MCF 10A (cell line): ENCODE measurements at regions of chr10 and their contacts with region 1.

Region 1: DNA sequence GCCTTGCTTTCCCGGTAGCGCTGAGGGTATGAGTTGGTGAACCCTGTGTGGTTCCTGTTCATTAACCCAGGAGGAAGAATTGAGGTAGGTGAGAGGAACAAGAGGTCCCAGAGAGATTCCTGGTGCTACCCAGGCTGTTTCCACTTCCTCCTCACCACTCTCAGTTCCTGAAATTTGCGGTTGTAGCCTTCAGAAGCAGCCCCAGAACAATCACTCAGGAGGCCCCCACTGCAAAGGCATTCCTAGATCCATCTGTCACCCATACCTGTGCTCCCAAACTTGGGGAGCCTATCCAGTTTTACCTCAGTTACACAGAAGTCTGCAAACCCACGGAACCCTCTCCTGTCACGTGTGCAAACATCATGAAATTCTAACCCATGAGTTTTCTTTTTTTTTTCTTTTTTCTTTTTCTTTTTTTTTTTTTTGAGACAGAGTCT is 9.0 kb upstream of the PIP4K2A start:
- DNase-seq: no peak
- H3K4me3 Mint-ChIP-seq: no peak overlapping the region
- H3K27ac Mint-ChIP-seq: no peak overlapping the region
- H3K4me1 Mint-ChIP-seq: no peaks in the 10 kb centered on the region
- H3K27me3 Mint-ChIP-seq: peaks cover 11% of the 10 kb centered on the region
- CTCF ChIP-seq: no peak

Region 2: GRCh38 chr10:22805283-22805682 is 81.9 kb after region 1 on chr10:
- CTCF ChIA-PET with region 1: interaction called, 5 read pairs
- POLR2A ChIA-PET with region 1: no interaction called
- intact Hi-C with region 1: loop called (anchors 10 kb)
- DNase-seq: no peak
- H3K4me3 Mint-ChIP-seq: no peak overlapping the region
- H3K27ac Mint-ChIP-seq: no peak overlapping the region
- H3K4me1 Mint-ChIP-seq: peaks cover 21% of the 10 kb centered on the region
- H3K27me3 Mint-ChIP-seq: no peaks in the 10 kb centered on the region
- CTCF ChIP-seq: no peak

Region 3: GRCh38 chr10:23438550-23439441 is 715.4 kb after region 1 on chr10 and contains the start of gene OTUD1:
- CTCF ChIA-PET with region 1: no interaction called
- POLR2A ChIA-PET with region 1: no interaction called
- intact Hi-C with region 1: no loop called
- DNase-seq: peak; percentile 93
- H3K4me3 Mint-ChIP-seq: peak within 1 kb of the TSS; percentile 83
- H3K27ac Mint-ChIP-seq: peak within 1 kb of the TSS; percentile 83
- H3K4me1 Mint-ChIP-seq: peaks cover 20% of the 10 kb centered on the region
- H3K27me3 Mint-ChIP-seq: no peaks in the 10 kb centered on the region
- CTCF ChIP-seq: no peak
- total RNA-seq, gene OTUD1: 12.1 and 14.9 TPM in 2 replicates